Adrenal gland (tissue), 19 donors: ENCODE measurements at regions of chr16 and their contacts with region 1.

Region 1: DNA sequence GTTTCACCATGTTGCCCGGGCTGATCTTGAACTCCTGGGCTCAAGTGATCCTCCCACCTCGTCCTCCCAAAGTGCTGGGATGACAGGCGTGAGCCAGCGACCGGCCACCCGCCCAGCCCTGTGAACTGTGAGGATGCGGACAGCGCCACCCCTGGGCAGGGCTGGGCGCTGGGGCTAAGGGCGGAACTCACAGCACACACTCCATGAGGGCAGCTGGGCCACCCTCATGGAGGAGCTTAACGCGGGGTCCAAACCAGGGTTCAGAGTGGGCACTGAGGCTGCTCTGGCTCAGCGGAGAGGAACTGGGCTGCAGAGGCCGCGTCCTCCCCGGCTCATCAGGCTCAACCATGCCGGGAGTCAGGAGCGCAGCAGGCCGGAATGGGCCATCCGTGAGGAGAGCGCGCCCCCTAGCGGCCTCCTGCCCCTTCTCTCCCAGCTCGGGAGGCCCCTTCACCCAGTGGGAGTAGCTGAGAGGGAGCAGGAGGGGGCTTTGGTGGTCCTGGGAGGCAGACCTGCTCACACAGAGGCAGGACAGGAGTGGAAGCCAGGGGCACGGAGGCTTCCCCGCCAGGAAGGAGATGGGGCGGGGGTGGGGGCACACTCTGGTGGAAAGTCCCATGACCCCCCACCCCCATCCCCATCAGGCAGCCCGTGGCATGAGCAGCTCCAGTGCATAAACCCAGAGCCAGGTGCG is 13.8 kb downstream of the CORO7 start:
- DNase-seq: peak; percentile 75 to 93 (median 86)
- H3K4me3 ChIP-seq: no peak overlapping the region
- H3K27ac ChIP-seq: no peak overlapping the region
- H3K4me1 ChIP-seq: no peaks in the 10 kb centered on the region
- H3K27me3 ChIP-seq: no peaks in the 10 kb centered on the region
- CTCF ChIP-seq: peak; percentile 86 to 97 (median 93)
- POLR2A ChIP-seq: no peak

Region 2: GRCh38 chr16:4019371-4019791 is 383.2 kb before region 1 on chr16:
- intact Hi-C with region 1: no loop called
- DNase-seq: peak in 5 of 7 donors; percentile 20 to 56 (median 37)
- H3K4me3 ChIP-seq: peak overlapping the region in 2 of 4 donors; percentile 11 to 50
- H3K27ac ChIP-seq: peak overlapping the region in 3 of 5 donors; percentile 46 to 71 (median 46)
- H3K4me1 ChIP-seq: peaks cover 0 to 3% of the 10 kb centered on the region in 2 donors
- H3K27me3 ChIP-seq: no peaks in the 10 kb centered on the region
- CTCF ChIP-seq: no peak
- POLR2A ChIP-seq: no peak

Region 3: DNA sequence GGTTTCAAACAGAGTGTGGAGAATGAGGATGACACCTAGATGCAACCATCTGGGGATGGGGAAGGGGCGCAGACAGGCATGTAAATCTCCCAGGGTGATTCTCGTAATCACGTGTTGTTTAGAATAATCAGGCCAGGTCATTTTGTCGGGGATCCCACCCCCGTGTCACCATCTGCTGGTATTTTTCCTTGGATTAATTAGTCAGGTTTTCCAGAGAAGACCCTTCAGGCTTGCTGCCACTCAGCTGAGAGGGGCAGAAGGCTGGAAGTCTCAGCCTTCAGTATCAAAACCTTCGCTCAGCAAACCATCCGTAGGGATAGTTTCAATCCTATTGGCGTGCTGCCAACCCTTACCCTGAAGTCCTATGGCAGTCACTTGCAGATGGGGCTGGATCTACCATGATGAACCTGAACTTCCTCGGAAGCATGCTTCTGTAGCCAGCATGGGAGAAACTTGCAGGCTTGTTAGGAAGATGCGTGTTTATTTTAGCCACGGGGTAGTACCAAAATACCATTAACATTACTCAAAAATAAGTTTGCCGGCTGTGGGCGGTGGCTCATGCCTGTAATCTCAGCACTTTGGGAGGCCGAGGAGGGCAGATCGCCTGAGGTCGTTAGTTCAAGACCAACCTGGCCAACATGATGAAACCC is 278.8 kb before region 1 on chr16:
- intact Hi-C with region 1: no loop called
- DNase-seq: no peak
- H3K4me3 ChIP-seq: no peak overlapping the region
- H3K27ac ChIP-seq: no peak overlapping the region
- H3K4me1 ChIP-seq: no peaks in the 10 kb centered on the region
- H3K27me3 ChIP-seq: no peaks in the 10 kb centered on the region
- CTCF ChIP-seq: no peak
- POLR2A ChIP-seq: no peak

Region 4: DNA sequence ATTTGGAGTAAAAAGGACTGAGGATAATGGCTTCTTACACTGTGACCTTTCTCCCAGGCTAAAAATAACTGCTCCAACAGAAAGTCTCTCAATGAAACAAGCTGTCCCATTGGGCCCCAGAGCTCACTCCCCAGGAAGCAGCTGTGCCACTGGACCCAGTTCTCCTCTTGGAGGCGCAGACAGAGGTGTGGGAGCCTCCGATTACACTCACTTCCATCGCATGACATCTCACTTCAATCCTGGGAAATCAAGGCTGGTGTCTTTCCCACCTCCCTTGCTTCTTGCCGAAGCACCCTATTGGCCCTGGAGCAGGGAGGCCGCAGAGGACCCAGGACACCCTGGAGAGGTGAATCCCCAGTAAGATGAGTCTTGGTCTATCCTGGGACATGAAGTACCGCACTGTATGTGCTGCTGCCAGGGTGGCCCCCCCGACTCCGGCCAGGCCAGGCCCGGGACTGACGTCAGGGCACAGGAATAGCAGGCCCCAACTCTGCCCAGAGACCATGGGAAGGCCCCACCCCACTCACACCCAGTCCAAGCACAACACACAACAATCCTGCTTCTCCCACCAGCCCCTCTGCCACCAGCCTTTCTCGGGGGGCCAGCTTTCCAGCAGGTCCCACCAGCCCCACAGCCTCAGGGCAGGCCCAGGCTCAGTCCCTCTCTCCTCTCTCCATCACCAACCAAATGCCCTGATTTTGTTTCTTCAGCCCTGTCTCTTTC is 190.2 kb before region 1 on chr16:
- intact Hi-C with region 1: no loop called
- DNase-seq: no peak
- H3K4me3 ChIP-seq: no peak overlapping the region
- H3K27ac ChIP-seq: peak overlapping the region in 2 of 5 donors; percentile 7 to 26
- H3K4me1 ChIP-seq: peaks cover 18 to 22% of the 10 kb centered on the region in 2 donors
- H3K27me3 ChIP-seq: no peaks in the 10 kb centered on the region
- CTCF ChIP-seq: no peak
- POLR2A ChIP-seq: no peak

Region 5: GRCh38 chr16:4261557-4262172 is 140.9 kb before region 1 on chr16:
- intact Hi-C with region 1: loop called in 1 of 2 experiments (anchors 10 kb)
- DNase-seq: peak in 3 of 7 donors; percentile 49 to 56 (median 56)
- H3K4me3 ChIP-seq: no peak overlapping the region
- H3K27ac ChIP-seq: no peak overlapping the region
- H3K4me1 ChIP-seq: peaks cover 0 to 16% of the 10 kb centered on the region in 2 donors
- H3K27me3 ChIP-seq: no peaks in the 10 kb centered on the region
- CTCF ChIP-seq: peak; percentile 50 to 83 (median 66)
- POLR2A ChIP-seq: no peak

Region 6: DNA sequence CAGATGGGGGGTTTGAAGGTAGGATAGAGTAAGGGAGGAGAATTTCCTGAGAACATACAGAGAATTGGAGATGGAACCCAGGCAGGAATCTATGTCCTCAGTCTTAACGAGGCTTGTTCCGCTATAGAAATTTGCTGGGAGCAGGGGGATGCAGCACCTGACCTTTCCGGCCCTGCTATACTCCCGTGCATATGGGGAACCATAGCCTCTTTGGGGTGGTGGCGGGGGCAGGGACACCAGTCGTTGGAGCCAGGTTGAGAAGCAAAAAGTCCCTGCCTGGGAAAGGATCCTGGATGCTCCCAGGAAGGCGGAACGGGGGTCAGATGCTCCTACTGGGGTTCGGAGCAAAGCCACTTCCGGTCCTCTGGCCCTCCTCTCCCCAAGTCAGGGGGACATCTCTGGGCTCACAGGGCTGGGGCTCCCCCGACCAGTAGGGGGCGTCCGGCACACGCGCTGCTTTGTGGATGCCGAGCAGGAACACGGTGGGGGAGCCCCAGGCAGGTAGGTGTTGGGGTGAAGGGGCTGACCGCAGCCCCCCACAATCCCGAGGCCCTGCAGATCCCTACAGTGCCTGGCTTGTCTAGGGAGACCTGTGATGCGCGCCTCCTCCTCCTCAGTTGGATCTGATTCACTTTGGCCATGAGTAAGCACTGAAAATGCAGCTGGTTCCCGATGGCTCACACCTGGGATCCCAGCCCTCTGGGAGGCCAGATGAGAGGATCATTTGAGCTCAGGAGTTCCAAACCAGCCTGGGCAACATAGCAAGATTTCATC is 114.3 kb before region 1 on chr16:
- intact Hi-C with region 1: loop called in 1 of 2 experiments (anchors 10 kb)
- DNase-seq: peak; percentile 55 to 82 (median 70)
- H3K4me3 ChIP-seq: no peak overlapping the region
- H3K27ac ChIP-seq: no peak overlapping the region
- H3K4me1 ChIP-seq: peaks cover 0 to 17% of the 10 kb centered on the region in 2 donors
- H3K27me3 ChIP-seq: no peaks in the 10 kb centered on the region
- CTCF ChIP-seq: peak; percentile 79 to 90 (median 82)
- POLR2A ChIP-seq: no peak

Region 7: DNA sequence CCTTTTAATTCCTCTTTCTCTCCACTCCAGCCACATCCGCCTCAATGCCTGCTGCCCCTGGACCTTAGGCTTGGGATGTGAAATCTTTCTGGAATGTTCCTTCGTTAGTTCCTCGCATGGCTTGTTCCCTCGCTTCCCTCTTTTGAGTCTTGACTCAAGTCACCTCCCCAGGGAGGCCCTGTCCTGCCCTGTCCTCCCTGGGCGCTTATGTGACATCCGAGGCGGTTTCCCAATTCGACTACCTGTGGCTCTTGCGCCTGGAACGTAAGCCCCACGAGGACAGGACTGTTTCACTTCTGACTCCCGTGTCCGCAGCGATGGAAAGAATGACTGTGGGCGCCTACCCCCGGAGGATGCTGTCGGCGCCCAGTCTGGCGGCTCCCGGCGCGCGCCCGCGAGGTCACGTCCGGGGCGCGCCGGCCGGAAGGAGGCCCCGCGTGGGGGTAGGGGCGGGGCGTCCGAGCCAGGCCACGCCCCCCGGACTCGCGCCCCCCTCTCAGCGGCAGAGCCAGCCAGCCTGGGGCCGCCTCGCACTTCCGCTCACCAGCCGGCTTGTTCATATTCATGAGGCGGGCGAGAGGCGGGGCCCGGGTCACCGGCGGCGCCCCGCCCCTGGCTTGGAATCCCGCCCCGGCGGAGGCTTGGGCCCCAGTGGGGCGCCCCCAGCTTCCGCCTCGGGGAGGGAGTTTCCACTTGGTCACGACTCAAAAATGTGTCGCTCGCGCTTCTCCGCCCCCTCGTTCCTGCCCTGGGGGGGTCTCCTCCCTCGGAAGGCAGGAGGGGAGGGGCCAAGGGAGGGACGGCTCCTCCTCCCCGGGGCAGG is 95.2 kb before region 1 on chr16:
- intact Hi-C with region 1: no loop called
- DNase-seq: peak; percentile 95 to 97 (median 96)
- H3K4me3 ChIP-seq: peak overlapping the region in 2 of 4 donors; percentile 46 to 53
- H3K27ac ChIP-seq: peak overlapping the region in 4 of 5 donors; percentile 66 to 89 (median 79)
- H3K4me1 ChIP-seq: peaks cover 7 to 12% of the 10 kb centered on the region in 2 donors
- H3K27me3 ChIP-seq: no peaks in the 10 kb centered on the region
- CTCF ChIP-seq: peak in 1 of 6 experiments; percentile 7
- POLR2A ChIP-seq: peak in 1 of 2 donors; percentile 48

Region 8: DNA sequence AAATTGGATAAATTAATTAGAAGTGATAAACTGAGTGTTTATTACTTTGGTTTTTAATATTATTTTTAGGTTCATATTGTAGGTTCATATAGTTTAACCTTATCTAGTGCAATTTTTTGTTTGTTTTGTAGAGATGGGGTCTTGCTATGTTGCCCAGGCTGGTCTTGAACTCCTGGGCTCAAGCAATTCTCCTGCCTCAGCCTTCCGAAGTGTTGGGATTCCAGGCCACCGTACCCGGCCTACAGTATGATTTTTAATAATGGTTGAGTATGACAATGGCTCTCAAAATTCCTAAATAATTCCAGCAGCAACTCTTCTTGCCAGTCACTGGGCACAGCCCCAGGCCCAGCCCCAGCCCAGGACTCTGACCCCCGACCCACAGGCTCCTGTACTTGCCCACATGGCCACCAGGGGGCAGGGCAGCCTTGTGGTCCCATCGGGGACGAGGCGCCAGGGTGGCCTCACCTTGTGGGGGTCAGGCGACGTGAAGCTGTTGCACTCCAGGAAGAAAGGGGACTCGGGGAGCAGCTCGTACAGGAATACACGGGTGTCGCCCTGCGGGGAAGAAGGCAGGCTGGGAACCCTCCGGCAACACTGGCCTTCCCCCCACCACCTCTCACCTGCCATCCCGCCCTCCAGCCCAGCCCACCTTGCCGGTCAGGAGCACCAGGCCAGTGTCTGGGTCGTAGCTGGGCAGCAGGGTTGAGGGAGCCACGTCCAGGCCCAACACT is 43.6 kb before region 1 on chr16:
- intact Hi-C with region 1: loop called (anchors 2 kb)
- DNase-seq: peak in 5 of 7 donors; percentile 54 to 83 (median 73)
- H3K4me3 ChIP-seq: no peak overlapping the region
- H3K27ac ChIP-seq: no peak overlapping the region
- H3K4me1 ChIP-seq: no peaks in the 10 kb centered on the region
- H3K27me3 ChIP-seq: no peaks in the 10 kb centered on the region
- CTCF ChIP-seq: peak; percentile 88 to 97 (median 92)
- POLR2A ChIP-seq: no peak